ENCODE measurements at regions of chr17 and their contacts with region 1.

Region 1: GRCh38 chr17:75338335-75338734 is 49.1 kb upstream of the SLC25A19 start:
- DNase-seq: peak in 2 of 10 donors; percentile 47 to 49
- ATAC-seq: peak; percentile 53 to 66
- H3K4me3 Mint-ChIP-seq: peak overlapping the region; percentile 42 to 86 (median 73)
- H3K27ac Mint-ChIP-seq: peak overlapping the region; percentile 74 to 92 (median 84)
- H3K4me1 Mint-ChIP-seq: peaks cover 26 to 85% (median 81%) of the 10 kb centered on the region in 4 donors
- H3K27me3 Mint-ChIP-seq: no peaks in the 10 kb centered on the region

Region 2: GRCh38 chr17:75124041-75124818 is 214.1 kb before region 1 on chr17:
- POLR2A ChIA-PET with region 1: no interaction called
- DNase-seq: no peak
- ATAC-seq: peak in 1 of 2 donors; percentile 41
- H3K4me3 Mint-ChIP-seq: peak overlapping the region in 2 of 10 donors; percentile 14 to 44
- H3K27ac Mint-ChIP-seq: peak overlapping the region in 7 of 10 donors; percentile 1 to 87 (median 50)
- H3K4me1 Mint-ChIP-seq: peaks cover 14 to 37% (median 28%) of the 10 kb centered on the region in 4 donors
- H3K27me3 Mint-ChIP-seq: no peaks in the 10 kb centered on the region

Region 3: GRCh38 chr17:75319904-75320691 is 18.2 kb before region 1 on chr17:
- POLR2A ChIA-PET with region 1: interaction called, 17 read pairs
- DNase-seq: no peak
- ATAC-seq: no peak
- H3K4me3 Mint-ChIP-seq: no peak overlapping the region
- H3K27ac Mint-ChIP-seq: peak overlapping the region in 2 of 10 donors; percentile 61 to 64
- H3K4me1 Mint-ChIP-seq: peaks cover 3 to 29% (median 9%) of the 10 kb centered on the region in 4 donors
- H3K27me3 Mint-ChIP-seq: no peaks in the 10 kb centered on the region